ENCODE measurements at regions of chr7 and their contacts with region 1.

Region 1: DNA sequence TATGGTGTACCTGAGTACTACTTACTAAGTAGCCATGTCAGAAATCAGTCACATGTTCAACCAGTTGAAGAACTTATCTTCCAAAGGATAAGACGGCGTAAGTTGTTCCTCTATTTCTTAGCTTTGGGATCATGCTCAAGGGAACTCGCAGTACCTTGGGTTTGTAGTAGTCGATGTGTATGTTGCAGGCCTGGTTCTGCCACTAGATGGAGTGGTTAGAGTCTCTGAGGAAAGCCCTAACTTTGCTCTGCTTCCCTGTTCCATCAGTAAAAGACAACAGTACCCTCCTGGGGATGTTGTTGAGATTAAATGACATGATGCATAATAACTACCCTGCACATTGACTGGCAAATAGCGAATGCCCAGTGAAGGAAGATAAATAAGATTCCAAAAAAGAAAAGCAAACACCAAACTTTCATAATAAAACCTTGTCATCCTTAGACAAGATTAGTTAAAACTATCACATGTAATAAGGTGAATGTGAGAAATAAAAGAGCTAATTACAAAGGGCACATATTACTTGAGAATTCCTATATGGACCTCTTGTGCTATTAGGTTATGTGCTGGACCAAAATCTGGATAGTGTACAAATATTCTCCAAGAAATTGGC is 165.9 kb downstream of the ABCA13 start:
- DNase-seq: peak; percentile 37
- H3K4me3 ChIP-seq: no peak overlapping the region
- H3K27ac ChIP-seq: no peak overlapping the region
- H3K4me1 ChIP-seq: no peaks in the 10 kb centered on the region
- H3K27me3 ChIP-seq: no peaks in the 10 kb centered on the region; the same call in 1 of the 2 replicates

Region 2: DNA sequence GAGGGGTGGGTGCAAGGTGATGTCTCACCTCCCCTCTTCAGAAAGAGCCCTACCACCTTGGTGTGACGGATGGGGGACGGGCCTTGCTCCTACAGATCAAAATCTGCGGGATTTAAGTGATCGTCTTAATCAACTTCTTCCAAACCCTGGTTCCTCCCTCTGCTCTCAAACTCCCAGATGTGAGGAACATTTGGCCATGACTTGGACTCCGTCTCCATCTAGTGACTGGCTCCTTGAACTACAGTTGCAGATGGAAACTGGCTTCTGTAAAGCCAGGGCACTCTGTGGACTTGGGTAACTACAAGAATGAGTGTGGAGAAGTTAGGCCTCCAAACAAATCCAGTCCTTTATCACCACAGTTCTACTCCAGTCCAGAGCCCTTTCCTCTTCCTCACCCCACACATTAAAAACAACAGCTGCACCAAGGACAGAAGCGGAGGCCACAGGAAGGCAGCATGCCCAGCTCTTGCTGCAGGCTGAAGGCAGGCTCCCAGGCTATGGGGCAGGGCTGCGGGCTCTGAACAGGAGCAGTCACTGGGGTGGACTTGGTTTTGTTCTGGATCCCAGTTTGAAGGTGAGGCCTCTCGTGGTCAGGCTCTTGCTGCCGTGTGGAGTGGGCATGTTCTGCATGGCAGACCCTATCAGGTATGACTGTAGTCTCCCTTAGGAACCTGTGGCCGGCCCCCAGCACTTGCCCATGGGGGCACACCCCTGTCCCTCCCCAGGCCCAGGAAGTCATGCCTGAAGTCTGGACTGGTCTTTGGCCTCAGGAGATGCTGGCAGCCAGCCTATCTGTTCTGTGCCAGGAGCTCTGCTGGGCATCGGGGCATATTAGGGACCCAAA is 1515.7 kb after region 1 on chr7:
- in situ Hi-C with region 1: loop called (anchors 25 kb)
- DNase-seq: peak; percentile 74
- H3K4me3 ChIP-seq: no peak overlapping the region
- H3K27ac ChIP-seq: no peak overlapping the region
- H3K4me1 ChIP-seq: no peaks in the 10 kb centered on the region
- H3K27me3 ChIP-seq: no peaks in the 10 kb centered on the region

Measured in GM23248 (cell line).